ENCODE measurements at regions of chr2 and their contacts with region 1.

Region 1: GRCh38 chr2:102442967-102443828 is 20.2 kb downstream of the IL18RAP start:
- DNase-seq: no peak
- ATAC-seq: peak in 2 of 4 donors; percentile 36 to 49
- H3K4me3 ChIP-seq: no peak overlapping the region
- H3K27ac ChIP-seq: peak overlapping the region in 1 of 12 donors; percentile 18
- H3K4me1 ChIP-seq: peaks cover 0 to 15% (median 0%) of the 10 kb centered on the region in 12 donors
- H3K27me3 ChIP-seq: no peaks in the 10 kb centered on the region
- CTCF ChIP-seq: peak; percentile 49 to 79 (median 62)
- POLR2A ChIP-seq: no peak

Region 2: DNA sequence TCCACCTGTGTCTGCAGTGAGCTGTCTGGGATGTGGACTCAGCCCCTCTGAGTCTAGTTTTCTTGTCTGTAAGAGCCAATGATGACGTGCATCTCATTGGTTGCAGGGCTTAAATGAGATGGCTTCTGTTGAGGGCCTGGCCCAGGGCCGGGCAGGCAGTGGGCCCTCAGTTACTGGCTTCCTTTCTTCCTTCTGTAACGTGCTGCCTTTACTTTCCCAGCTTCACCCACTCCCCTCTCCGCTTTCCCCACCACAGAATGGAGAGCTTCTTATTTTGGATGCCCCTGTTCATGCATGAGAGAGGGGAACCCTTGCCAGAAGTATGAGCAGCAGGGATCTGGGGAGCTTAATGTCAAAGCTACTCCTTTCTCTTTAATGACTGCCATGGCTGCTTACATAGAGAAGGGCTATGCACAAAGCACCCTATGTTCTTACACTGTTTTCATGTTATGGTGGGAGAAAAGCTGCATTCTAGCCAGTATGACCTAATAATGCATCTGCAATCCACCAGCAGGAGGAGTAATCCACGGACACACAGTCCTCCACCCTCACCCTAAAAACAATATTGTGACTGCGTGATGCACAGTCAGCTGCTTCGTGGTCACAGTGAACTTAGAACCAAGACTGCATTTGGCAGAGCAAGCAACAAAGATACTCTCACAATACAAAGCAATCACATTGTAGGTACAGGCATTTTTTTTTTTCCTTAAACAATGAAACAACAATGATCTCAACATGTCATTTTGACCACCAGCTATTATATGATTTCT is 1093.1 kb before region 1 on chr2:
- intact Hi-C with region 1: loop called in 2 of 10 experiments (anchors 10 kb)
- DNase-seq: no peak
- ATAC-seq: no peak
- H3K4me3 ChIP-seq: no peak overlapping the region
- H3K27ac ChIP-seq: no peak overlapping the region
- H3K4me1 ChIP-seq: no peaks in the 10 kb centered on the region
- H3K27me3 ChIP-seq: no peaks in the 10 kb centered on the region
- CTCF ChIP-seq: peak in 6 of 12 donors; percentile 19 to 32 (median 24)
- POLR2A ChIP-seq: no peak

Region 3: GRCh38 chr2:102005989-102006885 is 437.0 kb before region 1 on chr2:
- intact Hi-C with region 1: loop called in 6 of 10 experiments (anchors 5 to 10 kb)
- DNase-seq: peak in 1 of 5 donors; percentile 34
- ATAC-seq: peak; percentile 50 to 84 (median 70)
- H3K4me3 ChIP-seq: no peak overlapping the region
- H3K27ac ChIP-seq: no peak overlapping the region
- H3K4me1 ChIP-seq: peaks cover 0 to 29% (median 6%) of the 10 kb centered on the region in 12 donors
- H3K27me3 ChIP-seq: no peaks in the 10 kb centered on the region
- CTCF ChIP-seq: peak; percentile 36 to 73 (median 60)
- POLR2A ChIP-seq: no peak

Region 4: GRCh38 chr2:102251042-102251848 is 192.0 kb before region 1 on chr2:
- intact Hi-C with region 1: loop called in 9 of 10 experiments (anchors 2 to 10 kb)
- DNase-seq: peak; percentile 51 to 81 (median 63)
- ATAC-seq: peak; percentile 63 to 86 (median 78)
- H3K4me3 ChIP-seq: peak overlapping the region in 11 of 12 donors; percentile 25 to 61 (median 45)
- H3K27ac ChIP-seq: peak overlapping the region in 3 of 12 donors; percentile 15 to 74 (median 45)
- H3K4me1 ChIP-seq: peaks cover 0 to 29% (median 7%) of the 10 kb centered on the region in 12 donors
- H3K27me3 ChIP-seq: peaks cover 0 to 19% (median 3%) of the 10 kb centered on the region in 9 donors
- CTCF ChIP-seq: peak; percentile 53 to 78 (median 66)
- POLR2A ChIP-seq: no peak

Measured in heart left ventricle (tissue), 16 donors.